Mammary epithelial cell (primary cell): ENCODE measurements at regions of chr22 and their contacts with region 1.

Region 1: DNA sequence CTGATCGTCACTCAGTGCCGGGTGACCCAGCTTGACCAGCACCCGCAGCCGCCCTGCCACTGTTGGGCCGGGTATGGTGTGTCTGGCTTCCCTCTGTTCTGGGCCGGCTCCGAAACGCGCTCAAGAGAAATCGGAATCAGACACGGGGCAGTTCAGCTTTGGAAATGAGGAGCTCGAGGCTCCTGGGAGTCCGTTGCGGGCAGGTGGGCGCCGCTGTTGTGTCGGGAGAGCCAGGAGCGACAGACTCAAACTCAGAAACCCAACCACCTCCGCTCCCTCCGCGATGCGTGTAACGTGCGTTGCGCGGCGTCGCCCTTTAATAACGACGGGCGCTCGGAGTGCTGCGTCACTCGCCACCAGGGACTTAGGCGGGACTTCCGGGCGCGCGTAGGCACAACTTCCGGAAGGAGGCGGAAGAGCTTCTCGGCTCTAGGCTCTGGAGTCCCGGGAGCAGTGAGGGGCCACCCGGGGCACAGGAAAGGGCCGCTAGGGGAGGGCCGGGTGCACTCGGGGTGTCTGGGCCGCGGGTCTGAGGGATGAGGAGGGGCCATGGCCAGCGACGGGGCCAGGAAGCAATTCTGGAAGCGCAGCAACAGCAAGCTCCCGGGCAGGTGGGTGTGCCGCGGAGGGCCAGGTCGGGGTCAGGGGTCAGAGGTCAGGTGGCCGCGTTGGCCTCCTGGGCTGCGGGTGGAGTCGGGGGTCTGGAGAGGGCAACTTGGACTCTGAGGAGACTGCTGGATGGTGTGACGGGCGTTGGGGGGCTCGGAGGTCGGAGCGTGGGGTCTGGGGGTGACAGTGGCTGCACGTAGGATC is at the start of gene TBC1D22A:
- DNase-seq: peak; percentile 88
- H3K4me3 ChIP-seq: peak within 1 kb of the TSS; percentile 87 to 100 (median 98)
- H3K27ac ChIP-seq: peak within 1 kb of the TSS; percentile 84
- H3K4me1 ChIP-seq: peaks cover 11% of the 10 kb centered on the region
- H3K27me3 ChIP-seq: no peaks in the 10 kb centered on the region
- CTCF ChIP-seq: peak in 1 of 2 donors; percentile 3
- total RNA-seq, gene TBC1D22A: 19.3 to 27.0 TPM

Region 2: DNA sequence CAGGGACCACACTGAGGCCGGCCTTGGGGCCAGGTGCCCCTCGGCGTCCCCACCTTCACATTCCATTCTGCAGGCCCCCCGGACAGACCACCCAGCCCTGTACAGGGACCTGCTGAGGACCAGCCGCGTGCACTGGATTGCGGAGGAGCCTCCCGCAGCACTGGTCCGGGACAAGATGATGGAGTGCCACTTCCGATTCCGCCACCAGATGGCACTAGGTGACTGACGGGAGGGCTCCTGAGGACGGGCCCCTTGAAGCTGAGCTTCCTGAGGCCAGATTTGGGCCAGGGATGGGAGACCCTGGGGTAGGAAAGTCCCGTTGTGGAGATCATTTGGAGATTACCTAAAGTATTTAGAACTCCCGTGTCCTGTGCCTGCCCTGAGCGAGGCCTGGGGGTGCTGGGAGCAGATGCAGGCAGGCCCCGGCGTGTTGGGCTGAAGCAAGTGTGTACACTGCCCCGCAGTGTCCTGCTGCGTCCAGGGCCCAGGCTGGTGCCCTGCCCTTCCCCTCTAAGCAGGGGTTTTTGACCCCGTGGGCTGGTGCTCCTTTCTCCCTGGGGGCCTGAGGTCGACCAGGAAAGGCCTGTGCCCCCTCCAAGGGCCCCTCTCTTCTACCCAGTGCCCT is 407.0 kb before region 1 on chr22:
- CTCF ChIA-PET with region 1: no interaction called
- dilution Hi-C with region 1: no loop called
- in situ Hi-C with region 1: loop called in 1 of 2 experiments (anchors 25 kb)
- intact Hi-C with region 1: no loop called
- DNase-seq: peak; percentile 56
- H3K4me3 ChIP-seq: no peak overlapping the region
- H3K27ac ChIP-seq: no peak overlapping the region
- H3K4me1 ChIP-seq: peaks cover 26% of the 10 kb centered on the region
- H3K27me3 ChIP-seq: no peaks in the 10 kb centered on the region
- CTCF ChIP-seq: peak; percentile 68 to 90

Region 3: DNA sequence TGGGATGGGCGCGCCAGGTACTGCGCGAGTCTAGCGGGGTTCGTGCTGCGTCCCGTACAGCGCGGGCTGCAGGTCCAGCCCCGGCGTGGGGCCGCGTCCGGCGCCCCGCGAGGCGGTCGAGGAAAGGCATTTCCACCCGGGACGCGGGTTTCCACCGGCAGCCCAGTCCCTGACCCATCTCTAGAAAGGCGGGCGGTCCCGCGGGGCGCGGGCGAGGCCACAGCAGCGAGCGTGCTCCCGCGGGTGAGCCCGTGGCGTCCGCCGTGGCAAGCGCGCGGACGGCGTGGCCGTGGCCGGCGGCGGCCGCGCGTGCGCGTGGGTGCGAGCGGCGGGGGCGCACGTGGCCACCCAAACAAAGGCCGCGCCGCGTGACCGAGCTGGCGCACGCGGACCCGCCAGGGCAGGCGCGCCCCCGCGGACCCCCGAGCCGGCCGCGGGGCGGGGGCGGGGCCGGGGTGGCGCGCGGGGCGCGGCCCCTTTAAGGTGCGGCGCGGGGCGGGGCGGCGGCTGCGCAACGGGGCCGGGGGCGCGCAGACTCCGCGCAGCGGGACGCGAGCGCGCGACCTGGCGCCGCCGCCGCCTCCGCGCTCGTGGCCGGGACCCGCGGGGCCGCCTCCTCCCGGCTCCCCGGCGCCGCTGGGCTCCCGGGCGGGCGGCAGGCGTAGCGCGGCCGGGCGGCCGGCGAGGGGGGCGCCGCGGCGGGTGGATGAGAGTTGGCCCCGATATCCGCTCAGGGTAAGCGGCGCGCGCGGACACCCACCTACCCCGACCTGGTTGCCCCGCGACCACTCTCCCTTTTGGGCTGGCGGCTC is 185.7 kb before region 1 on chr22:
- CTCF ChIA-PET with region 1: no interaction called
- dilution Hi-C with region 1: no loop called
- in situ Hi-C with region 1: loop called in 1 of 2 experiments (anchors 10 kb)
- intact Hi-C with region 1: no loop called
- DNase-seq: peak; percentile 39
- H3K4me3 ChIP-seq: peak overlapping the region in 2 of 3 experiments; percentile 63 to 74
- H3K27ac ChIP-seq: no peak overlapping the region
- H3K4me1 ChIP-seq: peaks cover 48% of the 10 kb centered on the region
- H3K27me3 ChIP-seq: no peaks in the 10 kb centered on the region
- CTCF ChIP-seq: no peak

Region 4: DNA sequence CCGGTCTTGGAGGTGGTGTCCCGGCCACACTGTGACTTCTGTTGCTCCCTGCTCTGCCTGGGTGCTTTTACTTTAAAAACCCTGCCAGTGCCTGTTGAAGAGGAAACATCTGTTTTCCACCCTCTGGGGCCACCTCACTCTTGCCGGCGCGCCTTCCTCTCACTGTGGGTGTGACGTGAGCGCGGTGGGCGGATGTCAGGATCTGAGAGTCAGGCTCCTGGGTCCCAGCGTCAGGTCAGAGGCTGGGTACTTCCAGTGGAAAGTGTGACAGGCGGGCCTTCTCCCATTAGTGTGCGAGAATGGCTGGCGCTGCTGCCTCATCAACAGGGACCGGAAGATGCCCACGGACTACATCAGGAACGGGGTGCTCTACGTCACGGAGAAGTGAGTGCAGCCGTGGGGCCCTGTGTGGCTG is 88.1 kb before region 1 on chr22:
- CTCF ChIA-PET with region 1: no interaction called
- dilution Hi-C with region 1: no loop called
- in situ Hi-C with region 1: no loop called
- intact Hi-C with region 1: no loop called
- DNase-seq: no peak
- H3K4me3 ChIP-seq: no peak overlapping the region
- H3K27ac ChIP-seq: no peak overlapping the region
- H3K4me1 ChIP-seq: no peaks in the 10 kb centered on the region
- H3K27me3 ChIP-seq: no peaks in the 10 kb centered on the region
- CTCF ChIP-seq: no peak

Region 5: GRCh38 chr22:46774253-46774979 is 12.0 kb after region 1 on chr22:
- CTCF ChIA-PET with region 1: interaction called, 4 read pairs
- dilution Hi-C with region 1: no loop called
- in situ Hi-C with region 1: no loop called
- intact Hi-C with region 1: loop called (anchors 1 kb)
- DNase-seq: no peak
- H3K4me3 ChIP-seq: peak overlapping the region; percentile 33 to 37 (median 35)
- H3K27ac ChIP-seq: peak overlapping the region; percentile 57
- H3K4me1 ChIP-seq: peaks cover 24% of the 10 kb centered on the region
- H3K27me3 ChIP-seq: no peaks in the 10 kb centered on the region
- CTCF ChIP-seq: peak in 1 of 2 donors; percentile 13

Region 6: GRCh38 chr22:48492366-48493320 is 1730.2 kb after region 1 on chr22:
- CTCF ChIA-PET with region 1: no interaction called
- dilution Hi-C with region 1: no loop called
- in situ Hi-C with region 1: no loop called
- intact Hi-C with region 1: loop called (anchors 10 kb)
- DNase-seq: peak; percentile 31
- H3K4me3 ChIP-seq: no peak overlapping the region
- H3K27ac ChIP-seq: no peak overlapping the region
- H3K4me1 ChIP-seq: no peaks in the 10 kb centered on the region
- H3K27me3 ChIP-seq: peaks cover 15% of the 10 kb centered on the region
- CTCF ChIP-seq: peak; percentile 69 to 75